ENCODE measurements at regions of chr2 and their contacts with region 1.

Region 1: DNA sequence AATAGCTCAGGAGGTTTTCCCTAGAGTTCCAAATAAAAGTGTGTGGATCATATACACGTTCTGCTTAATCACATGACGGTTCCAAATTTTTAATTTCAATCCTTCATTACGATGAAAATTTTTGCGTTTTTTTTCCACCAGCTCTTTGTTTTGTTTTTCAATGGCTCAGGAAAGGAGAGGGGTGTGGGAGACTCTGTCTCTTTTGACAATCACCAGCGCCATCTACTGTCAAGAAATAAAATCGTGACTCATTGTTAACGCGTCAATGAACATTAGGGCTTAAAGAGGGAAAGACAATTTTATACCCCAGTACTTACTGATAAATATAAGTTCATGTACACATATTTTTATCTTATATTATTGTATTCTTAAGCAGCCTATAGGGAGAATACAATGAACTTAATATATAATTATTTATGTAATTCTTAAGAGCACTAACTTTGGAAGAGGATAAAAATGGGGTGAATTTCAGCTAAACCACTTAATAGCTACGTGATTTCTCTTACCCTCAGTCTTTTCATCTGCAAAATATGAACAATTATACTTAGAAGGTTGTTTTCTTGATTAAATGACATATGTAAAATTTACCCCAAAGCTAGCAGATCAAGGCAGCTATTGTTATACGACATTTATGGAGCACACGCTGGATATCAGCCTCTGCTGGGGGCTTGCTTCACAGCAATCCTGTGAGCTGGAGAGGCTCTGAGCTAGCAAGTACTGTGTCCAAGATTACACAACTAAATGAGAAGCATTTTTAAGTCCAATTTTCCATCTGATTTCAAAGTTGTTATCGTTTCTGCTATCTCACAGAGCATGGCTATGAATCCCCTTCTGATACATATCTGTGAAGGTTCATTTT is 47.4 kb upstream of the RMDN2 start:
- DNase-seq: no peak
- H3K4me3 ChIP-seq: no peak overlapping the region
- H3K27ac ChIP-seq: no peak overlapping the region
- H3K4me1 ChIP-seq: peaks cover 4 to 9% (median 4%) of the 10 kb centered on the region in 4 experiments; a peak in 5 of 7 replicates
- H3K27me3 ChIP-seq: no peaks in the 10 kb centered on the region
- CTCF ChIP-seq: peak in 2 of 3 experiments; percentile 55 to 56; a peak in 2 of 4 replicates
- EP300 ChIP-seq: no peak
- POLR2A ChIP-seq: no peak
- RAD21 ChIP-seq: peak; percentile 88 to 91

Region 2: GRCh38 chr2:37389989-37390765 is 487.5 kb before region 1 on chr2:
- CTCF ChIA-PET with region 1: interaction called, 192 read pairs
- POLR2A ChIA-PET with region 1: interaction called, 5 read pairs
- DNase-seq: peak; percentile 15 to 44
- H3K4me3 ChIP-seq: no peak overlapping the region
- H3K27ac ChIP-seq: no peak overlapping the region
- H3K4me1 ChIP-seq: peaks cover 0 to 9% (median 0%) of the 10 kb centered on the region in 4 experiments; a peak in 4 of 7 replicates
- H3K27me3 ChIP-seq: no peaks in the 10 kb centered on the region
- CTCF ChIP-seq: no peak
- EP300 ChIP-seq: no peak
- POLR2A ChIP-seq: no peak
- RAD21 ChIP-seq: no peak

Region 3: GRCh38 chr2:37402636-37403035 is 475.1 kb before region 1 on chr2:
- CTCF ChIA-PET with region 1: interaction called, 192 read pairs
- POLR2A ChIA-PET with region 1: no interaction called
- DNase-seq: no peak
- H3K4me3 ChIP-seq: no peak overlapping the region
- H3K27ac ChIP-seq: no peak overlapping the region
- H3K4me1 ChIP-seq: no peaks in the 10 kb centered on the region
- H3K27me3 ChIP-seq: no peaks in the 10 kb centered on the region
- CTCF ChIP-seq: no peak
- EP300 ChIP-seq: no peak
- POLR2A ChIP-seq: no peak
- RAD21 ChIP-seq: no peak

Region 4: GRCh38 chr2:37832590-37833197 is 45.0 kb before region 1 on chr2:
- CTCF ChIA-PET with region 1: interaction called, 15 read pairs
- POLR2A ChIA-PET with region 1: no interaction called
- DNase-seq: peak; percentile 41 to 85
- H3K4me3 ChIP-seq: no peak overlapping the region
- H3K27ac ChIP-seq: no peak overlapping the region
- H3K4me1 ChIP-seq: no peaks in the 10 kb centered on the region
- H3K27me3 ChIP-seq: no peaks in the 10 kb centered on the region
- CTCF ChIP-seq: peak; percentile 61 to 78 (median 73)
- EP300 ChIP-seq: no peak
- POLR2A ChIP-seq: no peak
- RAD21 ChIP-seq: peak; percentile 93 to 95

Region 5: GRCh38 chr2:37855283-37856041 is 22.2 kb before region 1 on chr2:
- CTCF ChIA-PET with region 1: interaction called, 17 read pairs
- POLR2A ChIA-PET with region 1: interaction called, 3 read pairs
- DNase-seq: no peak
- H3K4me3 ChIP-seq: no peak overlapping the region
- H3K27ac ChIP-seq: no peak overlapping the region
- H3K4me1 ChIP-seq: no peaks in the 10 kb centered on the region; a peak in 1 of 7 replicates
- H3K27me3 ChIP-seq: no peaks in the 10 kb centered on the region
- CTCF ChIP-seq: no peak
- EP300 ChIP-seq: no peak
- POLR2A ChIP-seq: no peak
- RAD21 ChIP-seq: no peak

Region 6: GRCh38 chr2:37890893-37891495 is 13.3 kb after region 1 on chr2:
- CTCF ChIA-PET with region 1: interaction called, 91 read pairs
- POLR2A ChIA-PET with region 1: no interaction called
- DNase-seq: peak; percentile 23 to 88
- H3K4me3 ChIP-seq: no peak overlapping the region
- H3K27ac ChIP-seq: no peak overlapping the region
- H3K4me1 ChIP-seq: peaks cover 0 to 3% (median under 1%) of the 10 kb centered on the region in 4 experiments; a peak in 3 of 7 replicates
- H3K27me3 ChIP-seq: no peaks in the 10 kb centered on the region
- CTCF ChIP-seq: peak; percentile 78 to 89 (median 85)
- EP300 ChIP-seq: no peak
- POLR2A ChIP-seq: no peak
- RAD21 ChIP-seq: peak; percentile 86 to 93